HepG2 (cell line): ENCODE measurements at regions of chr3 and their contacts with region 1.

Region 1: DNA sequence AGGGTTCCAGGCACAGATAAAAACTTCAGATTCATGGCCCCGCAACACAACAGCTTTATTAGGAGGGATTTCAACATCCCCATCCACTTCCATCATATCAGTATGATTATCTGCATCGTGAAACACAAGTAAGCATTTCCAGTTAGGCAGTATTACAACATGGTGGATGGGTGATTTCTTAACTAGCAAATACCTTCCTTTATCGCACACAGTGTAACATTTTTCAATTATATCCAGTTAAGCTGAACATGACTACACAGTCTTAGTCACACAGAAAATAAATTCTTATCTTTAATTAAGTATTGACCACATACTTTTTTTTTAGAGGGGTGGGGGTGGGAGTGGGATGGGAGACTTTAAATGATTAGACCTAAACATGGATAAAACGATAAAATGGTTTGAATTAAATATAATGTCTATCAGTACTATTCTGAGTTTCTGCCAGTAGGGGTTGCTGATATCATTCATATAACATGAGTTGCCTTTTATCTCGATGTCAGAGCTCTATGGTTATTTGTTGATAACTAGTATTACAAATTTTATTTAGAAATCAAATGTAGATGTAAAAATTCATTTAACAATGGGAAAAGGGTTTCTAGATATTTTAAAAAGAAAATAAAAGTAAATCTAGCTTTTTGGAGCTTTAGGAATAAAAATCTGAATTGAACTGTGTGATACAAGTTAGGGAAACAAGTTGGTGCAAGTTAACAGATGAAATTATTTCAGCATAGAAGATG is 146.6 kb downstream of the TBL1XR1 start:
- DNase-seq: peak; percentile 13
- ATAC-seq: no peak
- H3K4me3 ChIP-seq: no peak overlapping the region
- H3K27ac ChIP-seq: no peak overlapping the region
- H3K4me1 ChIP-seq: no peaks in the 10 kb centered on the region
- H3K27me3 ChIP-seq: no peaks in the 10 kb centered on the region
- CTCF ChIP-seq: peak; percentile 38
- EP300 ChIP-seq: no peak
- POLR2A ChIP-seq: no peak
- RAD21 ChIP-seq: no peak

Region 2: GRCh38 chr3:177378168-177378567 is 327.5 kb after region 1 on chr3:
- CTCF ChIA-PET with region 1: no interaction called
- POLR2A ChIA-PET with region 1: no interaction called
- in situ Hi-C with region 1: no loop called
- intact Hi-C with region 1: loop called (anchors 1 kb)
- DNase-seq: no peak
- ATAC-seq: no peak
- H3K4me3 ChIP-seq: no peak overlapping the region
- H3K27ac ChIP-seq: no peak overlapping the region
- H3K4me1 ChIP-seq: peaks cover 5% of the 10 kb centered on the region; the same call in 1 of the 2 replicates
- H3K27me3 ChIP-seq: peaks cover 0 to 6% of the 10 kb centered on the region in 2 experiments; a peak in 1 of 5 replicates
- CTCF ChIP-seq: no peak
- EP300 ChIP-seq: no peak
- POLR2A ChIP-seq: no peak
- RAD21 ChIP-seq: no peak

Region 3: DNA sequence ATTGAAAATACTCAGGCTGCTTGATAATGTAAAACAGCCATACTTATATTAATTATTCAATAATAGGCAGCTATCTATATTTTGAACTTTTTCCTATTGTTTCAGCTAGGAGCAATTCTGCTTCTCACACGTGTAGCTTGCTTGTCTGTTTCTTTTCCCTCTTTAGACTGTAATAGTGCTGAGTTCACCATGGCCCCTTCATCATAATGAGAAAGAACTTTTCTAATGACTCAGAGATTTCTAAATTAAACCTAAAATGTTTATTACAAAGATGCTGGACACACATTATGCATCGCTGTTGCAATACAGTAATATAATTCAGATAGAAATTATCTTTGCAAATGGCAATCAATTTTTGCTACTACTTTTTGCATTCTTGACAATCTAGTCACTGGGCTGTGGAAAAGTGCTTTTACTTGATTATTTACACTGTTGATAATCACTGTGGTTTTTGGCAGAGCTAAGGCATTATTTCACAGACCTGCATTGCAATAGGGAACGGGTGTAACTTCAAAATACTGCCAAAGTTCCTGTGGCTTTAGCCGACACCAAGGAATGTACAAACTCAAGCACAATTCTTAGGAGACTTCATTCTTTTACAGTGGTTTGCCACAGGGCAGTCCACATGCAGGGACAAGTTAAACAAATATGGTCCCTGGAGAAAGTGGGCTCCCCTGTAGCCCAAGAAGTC is 427.6 kb after region 1 on chr3:
- CTCF ChIA-PET with region 1: no interaction called
- POLR2A ChIA-PET with region 1: no interaction called
- in situ Hi-C with region 1: no loop called
- intact Hi-C with region 1: loop called (anchors 10 kb)
- DNase-seq: peak; percentile 23
- ATAC-seq: no peak
- H3K4me3 ChIP-seq: no peak overlapping the region
- H3K27ac ChIP-seq: no peak overlapping the region
- H3K4me1 ChIP-seq: peaks cover 57% of the 10 kb centered on the region
- H3K27me3 ChIP-seq: no peaks in the 10 kb centered on the region
- CTCF ChIP-seq: no peak
- EP300 ChIP-seq: no peak
- POLR2A ChIP-seq: no peak
- RAD21 ChIP-seq: no peak